ENCODE measurements at regions of chr3 and their contacts with region 1.

Region 1: GRCh38 chr3:99114565-99115291 is 213.2 kb upstream of the DCBLD2 start:
- DNase-seq: peak; percentile 49
- ATAC-seq: peak; percentile 100
- H3K4me3 ChIP-seq: no peak overlapping the region
- H3K27ac ChIP-seq: no peak overlapping the region
- H3K4me1 ChIP-seq: no peaks in the 10 kb centered on the region
- H3K27me3 ChIP-seq: no peaks in the 10 kb centered on the region
- CTCF ChIP-seq: peak; percentile 57 to 91 (median 85); a peak in 5 of 6 replicates
- POLR2A ChIP-seq: no peak
- RAD21 ChIP-seq: peak; percentile 86

Region 2: GRCh38 chr3:98877132-98877531 is 237.6 kb before region 1 on chr3:
- CTCF ChIA-PET with region 1: no interaction called
- POLR2A ChIA-PET with region 1: no interaction called
- RAD21 ChIA-PET with region 1: no interaction called
- intact Hi-C with region 1: no loop called
- DNase-seq: no peak
- ATAC-seq: peak; percentile 9; the same call in 1 of the 2 replicates
- H3K4me3 ChIP-seq: no peak overlapping the region
- H3K27ac ChIP-seq: peak overlapping the region; percentile 4; the same call in 1 of the 2 replicates
- H3K4me1 ChIP-seq: peaks cover 20 to 79% of the 10 kb centered on the region in 2 experiments; a peak in 3 of 4 replicates
- H3K27me3 ChIP-seq: no peaks in the 10 kb centered on the region
- CTCF ChIP-seq: no peak
- POLR2A ChIP-seq: no peak
- RAD21 ChIP-seq: no peak

Region 3: GRCh38 chr3:99134986-99135385 is 20.3 kb after region 1 on chr3:
- CTCF ChIA-PET with region 1: no interaction called
- POLR2A ChIA-PET with region 1: no interaction called
- RAD21 ChIA-PET with region 1: no interaction called
- intact Hi-C with region 1: no loop called
- DNase-seq: no peak
- ATAC-seq: no peak
- H3K4me3 ChIP-seq: no peak overlapping the region
- H3K27ac ChIP-seq: no peak overlapping the region
- H3K4me1 ChIP-seq: peaks cover 0 to 12% of the 10 kb centered on the region in 2 experiments; a peak in 2 of 4 replicates
- H3K27me3 ChIP-seq: no peaks in the 10 kb centered on the region
- CTCF ChIP-seq: no peak
- POLR2A ChIP-seq: no peak
- RAD21 ChIP-seq: no peak

Region 4: GRCh38 chr3:99172736-99173657 is 58.3 kb after region 1 on chr3:
- CTCF ChIA-PET with region 1: interaction called, 8 read pairs
- POLR2A ChIA-PET with region 1: no interaction called
- RAD21 ChIA-PET with region 1: interaction called in 1 of 2 experiments, 4 read pairs
- intact Hi-C with region 1: loop called (anchors 1 kb)
- DNase-seq: peak; percentile 56
- ATAC-seq: peak; percentile 93
- H3K4me3 ChIP-seq: no peak overlapping the region
- H3K27ac ChIP-seq: no peak overlapping the region
- H3K4me1 ChIP-seq: no peaks in the 10 kb centered on the region
- H3K27me3 ChIP-seq: no peaks in the 10 kb centered on the region
- CTCF ChIP-seq: peak; percentile 72 to 91 (median 88); a peak in 5 of 6 replicates
- POLR2A ChIP-seq: no peak
- RAD21 ChIP-seq: peak; percentile 82

Region 5: GRCh38 chr3:99532246-99532645 is 417.5 kb after region 1 on chr3:
- CTCF ChIA-PET with region 1: interaction called, 5 read pairs
- POLR2A ChIA-PET with region 1: no interaction called
- RAD21 ChIA-PET with region 1: no interaction called
- intact Hi-C with region 1: loop called (anchors 10 kb)
- DNase-seq: peak; percentile 31
- ATAC-seq: peak; percentile 99
- H3K4me3 ChIP-seq: no peak overlapping the region
- H3K27ac ChIP-seq: no peak overlapping the region
- H3K4me1 ChIP-seq: no peaks in the 10 kb centered on the region
- H3K27me3 ChIP-seq: peaks cover 58% of the 10 kb centered on the region
- CTCF ChIP-seq: peak; percentile 42 to 82 (median 76); a peak in 5 of 6 replicates
- POLR2A ChIP-seq: no peak
- RAD21 ChIP-seq: peak; percentile 61

Region 6: GRCh38 chr3:99686955-99687612 is 572.4 kb after region 1 on chr3:
- CTCF ChIA-PET with region 1: no interaction called
- POLR2A ChIA-PET with region 1: no interaction called
- RAD21 ChIA-PET with region 1: no interaction called
- intact Hi-C with region 1: loop called (anchors 1 kb)
- DNase-seq: peak; percentile 51
- ATAC-seq: peak; percentile 95
- H3K4me3 ChIP-seq: no peak overlapping the region
- H3K27ac ChIP-seq: no peak overlapping the region
- H3K4me1 ChIP-seq: no peaks in the 10 kb centered on the region
- H3K27me3 ChIP-seq: peaks cover 49% of the 10 kb centered on the region
- CTCF ChIP-seq: peak; percentile 40 to 71 (median 70); a peak in 5 of 6 replicates
- POLR2A ChIP-seq: no peak
- RAD21 ChIP-seq: peak; percentile 67

Region 7: GRCh38 chr3:99747915-99748314 is 633.2 kb after region 1 on chr3:
- CTCF ChIA-PET with region 1: interaction called, 18 read pairs
- POLR2A ChIA-PET with region 1: no interaction called
- RAD21 ChIA-PET with region 1: no interaction called
- intact Hi-C with region 1: loop called (anchors 1 kb)
- DNase-seq: peak; percentile 6
- ATAC-seq: peak; percentile 93
- H3K4me3 ChIP-seq: no peak overlapping the region
- H3K27ac ChIP-seq: no peak overlapping the region
- H3K4me1 ChIP-seq: no peaks in the 10 kb centered on the region
- H3K27me3 ChIP-seq: peaks cover 38% of the 10 kb centered on the region
- CTCF ChIP-seq: peak; percentile 9 to 40 (median 39); a peak in 4 of 6 replicates
- POLR2A ChIP-seq: no peak
- RAD21 ChIP-seq: peak; percentile 52

Region 8: GRCh38 chr3:99753268-99753975 is 638.7 kb after region 1 on chr3:
- CTCF ChIA-PET with region 1: interaction called, 18 read pairs
- POLR2A ChIA-PET with region 1: no interaction called
- RAD21 ChIA-PET with region 1: no interaction called
- intact Hi-C with region 1: loop called (anchors 1 kb)
- DNase-seq: peak; percentile 28
- ATAC-seq: peak; percentile 92
- H3K4me3 ChIP-seq: no peak overlapping the region
- H3K27ac ChIP-seq: no peak overlapping the region
- H3K4me1 ChIP-seq: no peaks in the 10 kb centered on the region
- H3K27me3 ChIP-seq: peaks cover 66% of the 10 kb centered on the region
- CTCF ChIP-seq: peak; percentile 37 to 76 (median 68); a peak in 5 of 6 replicates
- POLR2A ChIP-seq: no peak
- RAD21 ChIP-seq: peak; percentile 76

Measured in HCT116 (cell line).